ENCODE measurements at regions of chr20 and their contacts with region 1.

Region 1: GRCh38 chr20:46349035-46349741 is 40.9 kb upstream of the CDH22 start:
- DNase-seq: peak; percentile 69
- H3K4me3 Mint-ChIP-seq: no peak overlapping the region
- H3K27ac Mint-ChIP-seq: no peak overlapping the region
- H3K4me1 Mint-ChIP-seq: peaks cover 13% of the 10 kb centered on the region
- H3K27me3 Mint-ChIP-seq: peaks cover 7% of the 10 kb centered on the region

Region 2: DNA sequence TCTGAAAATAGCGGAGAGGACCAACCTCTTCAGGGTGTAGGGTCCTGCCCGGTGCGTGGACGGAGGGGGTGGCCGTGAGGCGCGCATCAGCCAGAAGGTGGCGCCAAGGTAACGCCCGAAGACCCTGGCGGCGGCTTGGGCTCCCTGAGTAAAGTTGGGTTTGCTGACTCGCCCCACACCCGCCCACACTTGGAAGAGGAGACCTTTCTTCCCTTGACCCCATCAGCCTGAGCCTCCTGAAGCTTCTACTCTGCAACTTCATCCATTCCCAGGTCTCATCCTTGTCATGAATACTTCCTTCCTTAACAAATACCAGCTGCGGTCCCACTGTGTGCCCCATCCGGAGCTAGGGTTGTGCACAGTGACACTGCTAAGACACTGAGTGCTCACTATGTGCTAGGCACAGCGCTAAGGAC is 216.5 kb before region 1 on chr20:
- CTCF ChIA-PET with region 1: interaction called, 10 read pairs
- DNase-seq: peak; percentile 69
- H3K4me3 Mint-ChIP-seq: no peak overlapping the region
- H3K27ac Mint-ChIP-seq: no peak overlapping the region
- H3K4me1 Mint-ChIP-seq: no peaks in the 10 kb centered on the region
- H3K27me3 Mint-ChIP-seq: peaks cover 58% of the 10 kb centered on the region

Region 3: DNA sequence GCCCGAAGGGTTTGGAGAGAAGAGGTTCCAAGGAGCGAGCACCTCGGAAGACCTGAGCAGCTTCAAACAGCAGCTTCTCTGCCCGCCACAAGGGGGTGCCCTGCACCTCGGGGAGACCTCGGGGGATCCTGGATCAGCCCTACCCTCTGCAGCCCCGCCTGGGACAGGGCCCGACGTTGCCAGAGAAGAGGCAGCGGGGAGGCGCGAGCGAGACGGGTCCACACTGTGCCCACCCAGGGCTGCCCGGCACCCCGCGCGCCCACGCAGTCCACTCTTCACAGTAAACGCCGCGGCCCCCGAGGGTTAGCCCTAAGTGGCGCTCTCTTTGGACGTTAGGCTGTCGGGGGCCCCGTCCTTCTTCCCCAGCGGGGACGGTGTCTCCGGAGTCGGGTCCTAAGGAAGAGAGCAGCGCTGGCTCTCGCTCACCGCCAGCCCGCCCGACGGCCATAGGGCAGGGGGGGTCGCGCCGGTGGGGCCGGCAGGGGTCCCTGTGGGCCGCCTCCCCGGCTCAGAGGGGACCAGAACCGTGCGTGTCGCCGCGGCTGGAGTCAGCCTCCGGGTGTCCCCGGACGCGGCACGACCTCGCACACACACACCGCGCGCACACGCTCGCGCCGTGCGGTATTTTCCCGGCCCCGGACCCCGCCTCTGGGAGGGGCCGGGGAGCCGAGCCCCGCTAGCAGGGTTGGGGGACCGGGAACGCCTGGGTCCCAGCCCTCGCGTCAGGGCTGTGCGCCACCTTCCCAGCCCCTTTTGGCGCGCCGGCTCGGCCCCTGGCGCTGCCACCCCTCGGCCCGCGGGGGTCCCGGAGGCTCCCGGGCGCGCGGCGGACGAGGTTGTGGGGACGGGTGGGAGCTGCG is 41.8 kb before region 1 on chr20:
- CTCF ChIA-PET with region 1: interaction called, 34 read pairs
- DNase-seq: peak; percentile 83
- H3K4me3 Mint-ChIP-seq: peak overlapping the region; percentile 19
- H3K27ac Mint-ChIP-seq: no peak overlapping the region
- H3K4me1 Mint-ChIP-seq: peaks cover 6% of the 10 kb centered on the region
- H3K27me3 Mint-ChIP-seq: peaks cover 93% of the 10 kb centered on the region

Region 4: DNA sequence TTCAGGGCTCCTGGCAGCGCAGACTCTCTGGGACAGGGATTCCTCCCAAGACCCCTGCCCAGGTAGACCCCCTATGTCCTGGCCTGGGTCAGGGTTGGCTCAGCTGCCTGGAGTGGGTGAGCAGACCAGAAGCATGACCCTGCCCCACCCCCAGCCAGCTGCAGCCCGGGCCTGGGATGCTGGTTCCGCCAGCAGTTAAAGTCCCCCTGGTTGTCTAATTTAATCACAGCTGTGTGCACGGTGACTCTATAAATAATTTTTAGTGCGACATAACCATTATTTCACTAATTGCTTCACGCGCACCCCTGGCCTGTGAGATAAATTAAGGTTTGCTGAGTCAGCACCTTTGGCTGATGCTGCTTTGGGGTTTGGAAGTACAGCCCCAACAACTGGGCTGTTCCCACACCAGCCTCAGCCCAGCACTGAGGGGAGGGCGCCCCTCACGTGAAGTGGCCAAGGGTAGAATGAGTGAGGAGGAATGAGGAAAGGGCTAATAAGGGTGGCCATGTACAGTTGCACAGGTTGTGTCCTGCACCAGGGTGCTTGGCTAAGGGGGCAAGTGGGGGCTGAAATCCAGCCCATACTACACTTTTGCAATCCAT is 14.8 kb before region 1 on chr20:
- CTCF ChIA-PET with region 1: interaction called, 13 read pairs
- DNase-seq: no peak
- H3K4me3 Mint-ChIP-seq: no peak overlapping the region
- H3K27ac Mint-ChIP-seq: no peak overlapping the region
- H3K4me1 Mint-ChIP-seq: no peaks in the 10 kb centered on the region
- H3K27me3 Mint-ChIP-seq: peaks cover 82% of the 10 kb centered on the region

Region 5: GRCh38 chr20:46359233-46359751 is 10.1 kb after region 1 on chr20:
- CTCF ChIA-PET with region 1: interaction called, 23 read pairs
- DNase-seq: no peak
- H3K4me3 Mint-ChIP-seq: no peak overlapping the region
- H3K27ac Mint-ChIP-seq: no peak overlapping the region
- H3K4me1 Mint-ChIP-seq: peaks cover 62% of the 10 kb centered on the region
- H3K27me3 Mint-ChIP-seq: no peaks in the 10 kb centered on the region